GM12878 (cell line): ENCODE measurements at regions of chr5 and their contacts with region 1.

Region 1: DNA sequence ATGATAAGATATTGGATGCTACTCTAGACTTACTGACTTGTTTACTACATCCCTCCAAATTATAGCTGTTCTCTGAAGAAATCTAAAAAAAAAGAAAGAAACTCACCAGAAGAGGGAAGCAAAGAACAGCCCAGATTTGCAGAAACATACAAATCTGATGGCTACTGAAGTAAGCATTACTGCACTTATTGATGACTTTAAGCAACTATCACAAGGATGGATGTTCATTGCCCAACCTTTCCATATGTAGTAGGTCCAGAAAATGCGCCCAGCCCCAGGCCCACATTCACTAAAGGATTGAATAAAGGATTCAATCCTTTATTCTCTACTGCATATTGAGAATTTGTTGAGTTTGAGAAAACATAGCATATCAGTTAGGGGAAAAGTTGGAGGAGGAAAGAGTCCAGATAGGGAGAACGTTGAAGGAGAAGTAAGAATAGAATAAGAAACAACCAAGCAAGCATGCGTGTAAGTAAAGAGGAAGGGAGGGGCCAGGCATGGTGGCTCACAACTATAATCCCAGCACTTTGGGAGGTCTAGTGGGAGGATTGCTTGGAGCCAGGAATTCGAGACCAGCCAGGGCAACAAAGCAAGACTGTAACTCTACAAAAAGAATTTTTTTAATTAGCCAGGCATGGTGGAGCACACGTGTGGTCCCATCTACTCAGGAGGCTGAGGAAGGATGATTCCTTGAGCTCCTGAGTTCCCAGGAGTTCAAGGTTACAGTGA is 33.8 kb upstream of the DTWD2 start:
- DNase-seq: no peak
- ATAC-seq: peak; percentile 87
- H3K4me3 ChIP-seq: no peak overlapping the region
- H3K27ac ChIP-seq: no peak overlapping the region
- H3K4me1 ChIP-seq: peaks cover 12% of the 10 kb centered on the region; the same call in 1 of the 2 replicates
- H3K27me3 ChIP-seq: no peaks in the 10 kb centered on the region
- CTCF ChIP-seq: peak; percentile 49 to 69 (median 54); a peak in 5 of 6 replicates
- EP300 ChIP-seq: no peak
- POLR2A ChIP-seq: no peak
- RAD21 ChIP-seq: peak; percentile 92

Region 2: DNA sequence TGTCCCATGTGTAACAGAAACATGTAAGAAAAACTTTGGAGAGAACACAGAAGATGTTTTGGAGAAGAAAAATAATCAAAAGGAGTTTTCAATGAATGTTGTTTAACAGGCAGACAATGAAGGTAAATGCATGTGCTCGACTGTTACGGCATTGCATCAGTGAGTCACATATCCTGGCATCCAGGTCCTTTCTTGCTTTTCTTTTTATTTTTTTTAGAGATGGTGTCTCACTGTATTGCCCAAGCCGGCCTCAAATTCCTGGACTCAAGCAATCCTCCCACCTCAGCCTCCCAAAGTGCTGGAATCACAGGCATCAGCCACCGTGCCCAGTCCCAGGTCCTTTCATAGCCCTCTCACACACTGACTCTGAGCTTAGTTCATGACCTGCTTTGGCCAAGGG is 215.6 kb before region 1 on chr5:
- CTCF ChIA-PET with region 1: no interaction called
- POLR2A ChIA-PET with region 1: no interaction called
- RAD21 ChIA-PET with region 1: no interaction called
- SMC1A ChIA-PET with region 1: no interaction called
- in situ Hi-C with region 1: no loop called
- intact Hi-C with region 1: no loop called
- DNase-seq: no peak
- ATAC-seq: no peak
- H3K4me3 ChIP-seq: no peak overlapping the region
- H3K27ac ChIP-seq: no peak overlapping the region
- H3K4me1 ChIP-seq: no peaks in the 10 kb centered on the region
- H3K27me3 ChIP-seq: no peaks in the 10 kb centered on the region
- CTCF ChIP-seq: no peak
- EP300 ChIP-seq: no peak
- POLR2A ChIP-seq: no peak
- RAD21 ChIP-seq: no peak

Region 3: DNA sequence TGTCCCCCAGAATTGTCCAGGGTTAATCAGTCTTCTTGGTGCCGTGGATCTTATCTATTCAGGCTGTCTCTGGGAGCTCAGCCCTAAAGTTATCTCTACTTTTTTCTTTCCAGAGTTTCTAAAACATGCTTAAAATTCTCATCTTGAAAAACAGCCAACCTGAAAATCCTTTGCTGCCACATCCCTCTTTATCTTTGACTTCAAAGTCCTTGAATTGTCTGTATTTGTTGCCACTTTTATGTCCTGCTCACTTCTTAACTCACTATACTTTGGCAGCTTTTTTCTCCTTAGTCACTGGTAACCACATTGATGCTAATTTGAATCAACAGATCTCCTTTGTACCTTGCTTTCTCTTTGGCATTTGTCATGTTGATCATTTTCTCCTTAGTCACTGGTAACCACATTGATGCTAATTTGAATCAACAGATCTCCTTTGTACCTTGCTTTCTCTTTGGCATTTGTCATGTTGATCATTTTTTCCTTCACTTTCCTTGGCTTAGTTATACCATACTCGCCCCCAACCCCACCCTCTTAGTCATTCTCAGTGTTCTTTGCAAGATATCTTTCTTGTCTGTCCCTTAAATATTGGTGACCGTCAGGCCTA is 57.2 kb after region 1 on chr5:
- CTCF ChIA-PET with region 1: interaction called, 9 read pairs
- POLR2A ChIA-PET with region 1: interaction called, 4 read pairs
- RAD21 ChIA-PET with region 1: interaction called, 10 read pairs
- SMC1A ChIA-PET with region 1: interaction called, 6 read pairs
- in situ Hi-C with region 1: no loop called
- intact Hi-C with region 1: no loop called
- DNase-seq: no peak
- ATAC-seq: peak; percentile 55
- H3K4me3 ChIP-seq: peak overlapping the region; percentile 47; the same call in 1 of the 2 replicates
- H3K27ac ChIP-seq: peak overlapping the region; percentile 70
- H3K4me1 ChIP-seq: peaks cover 33% of the 10 kb centered on the region
- H3K27me3 ChIP-seq: no peaks in the 10 kb centered on the region
- CTCF ChIP-seq: no peak
- EP300 ChIP-seq: no peak
- POLR2A ChIP-seq: no peak
- RAD21 ChIP-seq: no peak

Region 4: GRCh38 chr5:119187776-119188529 is 165.8 kb after region 1 on chr5:
- CTCF ChIA-PET with region 1: no interaction called
- POLR2A ChIA-PET with region 1: no interaction called
- RAD21 ChIA-PET with region 1: no interaction called
- SMC1A ChIA-PET with region 1: no interaction called
- in situ Hi-C with region 1: no loop called
- intact Hi-C with region 1: no loop called
- DNase-seq: no peak
- ATAC-seq: no peak
- H3K4me3 ChIP-seq: no peak overlapping the region
- H3K27ac ChIP-seq: no peak overlapping the region
- H3K4me1 ChIP-seq: no peaks in the 10 kb centered on the region
- H3K27me3 ChIP-seq: no peaks in the 10 kb centered on the region
- CTCF ChIP-seq: no peak
- EP300 ChIP-seq: no peak
- POLR2A ChIP-seq: no peak
- RAD21 ChIP-seq: no peak

Region 5: GRCh38 chr5:119255571-119256356 is 233.6 kb after region 1 on chr5:
- CTCF ChIA-PET with region 1: interaction called, 16 read pairs
- POLR2A ChIA-PET with region 1: interaction called, 3 read pairs
- RAD21 ChIA-PET with region 1: interaction called, 15 read pairs
- SMC1A ChIA-PET with region 1: interaction called, 4 read pairs
- in situ Hi-C with region 1: no loop called
- intact Hi-C with region 1: no loop called
- DNase-seq: no peak
- ATAC-seq: peak; percentile 84
- H3K4me3 ChIP-seq: no peak overlapping the region
- H3K27ac ChIP-seq: no peak overlapping the region
- H3K4me1 ChIP-seq: no peaks in the 10 kb centered on the region
- H3K27me3 ChIP-seq: no peaks in the 10 kb centered on the region
- CTCF ChIP-seq: peak in 2 of 3 experiments; percentile 30 to 31; a peak in 3 of 6 replicates
- EP300 ChIP-seq: no peak
- POLR2A ChIP-seq: no peak
- RAD21 ChIP-seq: peak; percentile 49

Region 6: DNA sequence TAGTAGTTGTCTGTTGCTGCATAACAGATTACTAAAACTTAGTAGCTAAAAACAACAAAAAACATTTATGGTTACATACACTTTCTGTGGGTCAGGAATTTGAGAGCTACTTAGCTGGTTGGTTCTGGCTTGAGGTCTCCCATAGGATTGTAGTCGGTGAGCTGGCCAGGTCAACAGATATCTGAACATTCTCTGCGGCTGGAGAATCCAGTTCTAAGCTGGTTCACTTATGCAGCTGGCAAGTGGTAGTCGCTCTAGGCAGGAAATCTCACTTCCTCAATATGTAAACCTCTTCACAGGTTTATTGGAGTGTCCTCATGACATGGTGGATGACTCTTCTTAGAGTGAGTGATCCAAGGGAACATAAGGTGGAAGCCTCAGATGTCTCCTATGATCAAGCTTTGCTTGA is 268.0 kb after region 1 on chr5:
- CTCF ChIA-PET with region 1: no interaction called
- POLR2A ChIA-PET with region 1: no interaction called
- RAD21 ChIA-PET with region 1: interaction called, 5 read pairs
- SMC1A ChIA-PET with region 1: interaction called, 10 read pairs
- in situ Hi-C with region 1: no loop called
- intact Hi-C with region 1: no loop called
- DNase-seq: peak; percentile 66
- ATAC-seq: peak; percentile 90
- H3K4me3 ChIP-seq: peak overlapping the region; percentile 38
- H3K27ac ChIP-seq: peak overlapping the region; percentile 84
- H3K4me1 ChIP-seq: peaks cover 46% of the 10 kb centered on the region
- H3K27me3 ChIP-seq: no peaks in the 10 kb centered on the region
- CTCF ChIP-seq: no peak
- EP300 ChIP-seq: peak; percentile 69 to 79; a peak in 2 of 4 replicates
- POLR2A ChIP-seq: no peak
- RAD21 ChIP-seq: no peak

Region 7: GRCh38 chr5:119435436-119436132 is 413.4 kb after region 1 on chr5:
- CTCF ChIA-PET with region 1: interaction called, 11 read pairs
- POLR2A ChIA-PET with region 1: no interaction called
- RAD21 ChIA-PET with region 1: interaction called, 18 read pairs
- SMC1A ChIA-PET with region 1: interaction called, 9 read pairs
- in situ Hi-C with region 1: no loop called
- intact Hi-C with region 1: no loop called
- DNase-seq: peak; percentile 44
- ATAC-seq: peak; percentile 95
- H3K4me3 ChIP-seq: no peak overlapping the region
- H3K27ac ChIP-seq: no peak overlapping the region
- H3K4me1 ChIP-seq: peaks cover 5% of the 10 kb centered on the region; the same call in 1 of the 2 replicates
- H3K27me3 ChIP-seq: no peaks in the 10 kb centered on the region
- CTCF ChIP-seq: peak; percentile 64 to 69 (median 64)
- EP300 ChIP-seq: no peak
- POLR2A ChIP-seq: no peak
- RAD21 ChIP-seq: peak; percentile 75